ENCODE measurements at regions of chr11 and their contacts with region 1.

Region 1: GRCh38 chr11:1931341-1932099 is 12.0 kb downstream of the TNNT3 start:
- DNase-seq: peak; percentile 73

Region 2: GRCh38 chr11:1912289-1912878 is 19.1 kb before region 1 on chr11:
- intact Hi-C with region 1: loop called (anchors 2 kb)
- DNase-seq: no peak

Measured in cardiac septum (tissue), 1 donor.